Sigmoid colon (tissue), 7 donors: ENCODE measurements at regions of chr12 and their contacts with region 1.

Region 1: DNA sequence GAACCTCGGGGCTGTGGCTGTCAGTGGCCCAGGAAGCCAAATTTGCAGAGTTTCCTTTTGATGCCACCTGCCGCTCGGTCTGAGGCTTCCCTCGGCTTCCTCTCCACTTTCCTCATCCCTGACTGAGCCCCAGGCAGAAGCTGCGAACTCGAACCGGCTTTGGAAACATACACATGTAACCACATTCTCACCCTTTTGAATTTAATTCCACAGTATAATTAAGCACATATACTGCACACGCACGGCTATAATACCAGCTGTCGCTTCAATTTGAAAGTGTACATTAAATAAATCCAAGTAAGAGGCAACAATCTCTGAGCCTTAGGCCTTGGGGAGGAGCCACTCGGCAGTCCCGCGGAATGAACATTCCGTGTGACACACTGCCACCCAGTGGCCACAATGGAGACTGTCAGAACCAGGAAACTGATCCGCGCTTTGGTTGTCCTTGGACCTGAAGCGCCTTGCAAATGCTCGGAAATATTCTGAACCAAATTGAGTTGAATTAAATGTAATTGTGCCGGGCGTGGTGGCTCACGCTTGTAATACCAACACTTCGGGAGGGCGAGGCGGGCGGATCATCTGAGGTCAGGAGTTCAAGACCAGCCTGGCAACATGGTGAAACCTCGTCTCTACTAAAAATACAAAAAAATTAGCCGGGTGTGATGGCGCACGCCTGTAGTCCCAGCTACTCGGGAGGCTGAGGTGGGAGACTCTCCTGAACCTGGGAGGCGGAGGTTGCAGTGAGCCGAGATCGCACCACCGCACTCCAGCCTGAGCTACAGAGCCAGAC is 117.9 kb upstream of the TMPO start:
- DNase-seq: peak; percentile 86
- H3K4me3 ChIP-seq: peak overlapping the region; percentile 25 to 45 (median 44)
- H3K27ac ChIP-seq: peak overlapping the region in 3 of 4 donors; percentile 14 to 52 (median 39)
- H3K4me1 ChIP-seq: peaks cover 0 to 9% (median 3%) of the 10 kb centered on the region in 4 donors
- H3K27me3 ChIP-seq: no peaks in the 10 kb centered on the region
- CTCF ChIP-seq: peak; percentile 69 to 89 (median 82)
- EP300 ChIP-seq: no peak
- POLR2A ChIP-seq: no peak

Region 2: DNA sequence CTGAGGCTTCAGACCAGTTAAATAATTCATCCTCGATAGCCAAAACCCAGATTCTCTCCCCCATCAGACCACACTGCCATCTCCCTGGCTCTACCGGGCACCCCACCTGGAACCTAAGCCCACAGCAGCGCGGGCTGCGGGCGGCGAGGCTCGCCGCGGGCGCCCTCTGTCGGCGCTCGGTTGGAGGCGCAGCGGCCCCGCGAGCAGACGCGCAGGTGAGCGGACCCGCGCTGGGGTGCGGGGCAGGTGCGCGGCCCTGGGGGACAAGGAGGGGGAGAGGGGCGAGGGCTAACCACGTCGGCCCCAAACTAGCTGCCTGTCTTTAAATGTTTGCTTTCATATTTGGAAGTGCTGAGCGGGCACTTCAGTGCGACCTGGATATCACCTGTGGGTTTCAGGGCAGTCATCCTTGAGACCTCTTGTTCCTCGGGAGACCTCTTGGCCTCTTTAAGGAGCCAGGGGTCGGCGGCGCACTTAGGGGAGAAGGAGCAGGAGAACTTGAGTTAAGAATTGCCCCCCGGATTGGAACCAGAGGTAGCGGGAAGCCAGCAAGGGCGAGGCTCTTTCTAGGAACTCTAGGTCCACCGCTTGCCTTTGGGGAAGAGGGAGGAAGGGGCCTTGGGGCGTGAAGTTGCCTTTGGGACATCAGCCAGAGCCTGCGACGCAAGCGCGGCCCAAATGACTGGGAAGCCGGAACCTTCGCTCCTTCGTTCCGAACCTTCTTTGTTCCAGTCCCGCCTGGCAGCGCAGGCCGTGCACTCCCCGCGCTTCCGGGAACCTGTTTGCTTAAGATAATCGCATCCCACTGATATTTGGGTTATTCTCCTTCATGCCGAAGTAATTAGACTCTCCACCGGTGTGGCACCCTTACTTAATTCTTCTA is 1411.8 kb before region 1 on chr12:
- intact Hi-C with region 1: loop called (anchors 2 kb)
- DNase-seq: no peak
- H3K4me3 ChIP-seq: peak overlapping the region; percentile 1 to 53 (median 38)
- H3K27ac ChIP-seq: no peak overlapping the region
- H3K4me1 ChIP-seq: peaks cover 0 to 12% (median 11%) of the 10 kb centered on the region in 4 donors
- H3K27me3 ChIP-seq: peaks cover 0 to 17% (median 4%) of the 10 kb centered on the region in 3 donors
- CTCF ChIP-seq: peak in 1 of 4 experiments; percentile 84
- EP300 ChIP-seq: no peak
- POLR2A ChIP-seq: no peak

Region 3: GRCh38 chr12:97148941-97149559 is 1248.5 kb before region 1 on chr12:
- intact Hi-C with region 1: loop called (anchors 2 kb)
- DNase-seq: no peak
- H3K4me3 ChIP-seq: no peak overlapping the region
- H3K27ac ChIP-seq: no peak overlapping the region
- H3K4me1 ChIP-seq: no peaks in the 10 kb centered on the region
- H3K27me3 ChIP-seq: no peaks in the 10 kb centered on the region
- CTCF ChIP-seq: peak in 2 of 4 experiments; percentile 42 to 49
- EP300 ChIP-seq: no peak
- POLR2A ChIP-seq: no peak

Region 4: DNA sequence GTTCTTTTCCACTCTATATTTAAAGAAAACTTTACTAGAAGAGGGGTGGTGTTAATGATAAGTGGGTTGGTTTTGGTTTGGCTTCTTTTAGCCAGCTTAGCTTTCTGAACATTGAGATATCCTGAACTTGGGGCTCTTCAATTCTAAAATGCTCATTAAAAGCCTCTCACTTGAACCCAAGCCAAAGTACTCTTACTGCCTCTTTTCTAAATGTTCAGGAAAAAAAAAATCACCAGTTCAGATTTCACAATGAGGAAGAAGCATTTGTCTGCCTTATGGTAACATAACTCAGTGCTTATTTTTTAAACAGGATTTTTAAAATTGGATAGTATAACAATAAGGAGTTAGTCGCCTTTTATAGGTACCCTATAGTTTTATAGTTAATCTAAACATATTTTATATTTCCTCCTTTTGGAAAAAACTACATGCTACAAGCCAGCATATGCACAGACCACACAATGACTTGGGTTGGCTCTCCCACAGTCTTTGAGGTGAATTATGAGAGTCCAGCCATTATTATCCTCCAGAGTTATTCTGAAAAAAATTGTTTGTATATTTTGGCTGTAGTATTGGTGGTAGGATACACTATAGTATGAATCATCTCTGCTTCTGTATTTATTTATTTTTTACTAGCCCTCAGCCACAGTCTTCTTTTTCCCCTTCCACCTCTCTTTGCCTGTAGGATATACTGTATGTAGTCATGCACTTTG is 77.6 kb before region 1 on chr12:
- intact Hi-C with region 1: no loop called
- DNase-seq: no peak
- H3K4me3 ChIP-seq: no peak overlapping the region
- H3K27ac ChIP-seq: no peak overlapping the region
- H3K4me1 ChIP-seq: no peaks in the 10 kb centered on the region
- H3K27me3 ChIP-seq: no peaks in the 10 kb centered on the region
- CTCF ChIP-seq: no peak
- EP300 ChIP-seq: no peak
- POLR2A ChIP-seq: no peak